Activated B cell treated with CpG ODN at 0.5 μM for 24 hours (primary cell): ENCODE measurements at regions of chr12 and their contacts with region 1.

Region 1: DNA sequence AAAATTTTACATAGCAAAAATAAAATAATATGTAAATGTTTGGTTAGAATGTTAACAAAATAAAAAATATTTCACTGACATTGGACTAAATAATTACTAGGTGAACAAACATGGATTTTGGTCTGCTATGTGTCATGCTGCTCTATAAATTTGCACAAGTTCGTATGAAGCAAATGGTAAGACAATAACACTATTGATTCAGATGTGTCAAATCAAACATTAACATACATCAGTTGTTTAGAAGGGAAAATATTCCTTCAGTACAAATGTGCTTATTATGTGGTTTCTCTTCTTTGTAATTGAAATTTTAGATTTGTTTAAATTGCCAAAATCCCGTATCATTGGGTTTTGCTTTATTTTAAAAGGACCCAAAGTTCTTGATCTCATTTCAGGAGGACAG is 46.9 kb downstream of the PAWR start:
- DNase-seq: no peak
- ATAC-seq: no peak
- H3K4me3 Mint-ChIP-seq: no peak overlapping the region
- H3K27ac Mint-ChIP-seq: no peak overlapping the region
- H3K4me1 Mint-ChIP-seq: peaks cover 18% of the 10 kb centered on the region
- H3K27me3 Mint-ChIP-seq: no peaks in the 10 kb centered on the region
- CTCF ChIP-seq: no peak

Region 2: GRCh38 chr12:77710209-77710608 is 1933.6 kb before region 1 on chr12:
- CTCF ChIA-PET with region 1: no interaction called
- POLR2A ChIA-PET with region 1: no interaction called
- intact Hi-C with region 1: no loop called
- DNase-seq: no peak
- ATAC-seq: no peak
- H3K4me3 Mint-ChIP-seq: no peak overlapping the region
- H3K27ac Mint-ChIP-seq: no peak overlapping the region
- H3K4me1 Mint-ChIP-seq: no peaks in the 10 kb centered on the region
- H3K27me3 Mint-ChIP-seq: no peaks in the 10 kb centered on the region
- CTCF ChIP-seq: no peak

Region 3: GRCh38 chr12:79657136-79657535 is 13.3 kb after region 1 on chr12:
- CTCF ChIA-PET with region 1: no interaction called
- POLR2A ChIA-PET with region 1: no interaction called
- intact Hi-C with region 1: loop called (anchors 2 kb)
- DNase-seq: no peak
- ATAC-seq: no peak
- H3K4me3 Mint-ChIP-seq: no peak overlapping the region
- H3K27ac Mint-ChIP-seq: no peak overlapping the region
- H3K4me1 Mint-ChIP-seq: peaks cover 10% of the 10 kb centered on the region
- H3K27me3 Mint-ChIP-seq: no peaks in the 10 kb centered on the region
- CTCF ChIP-seq: no peak